Sciatic nerve (tissue), 2 donors: ENCODE measurements at regions of chr12 and their contacts with region 1.

Region 1: DNA sequence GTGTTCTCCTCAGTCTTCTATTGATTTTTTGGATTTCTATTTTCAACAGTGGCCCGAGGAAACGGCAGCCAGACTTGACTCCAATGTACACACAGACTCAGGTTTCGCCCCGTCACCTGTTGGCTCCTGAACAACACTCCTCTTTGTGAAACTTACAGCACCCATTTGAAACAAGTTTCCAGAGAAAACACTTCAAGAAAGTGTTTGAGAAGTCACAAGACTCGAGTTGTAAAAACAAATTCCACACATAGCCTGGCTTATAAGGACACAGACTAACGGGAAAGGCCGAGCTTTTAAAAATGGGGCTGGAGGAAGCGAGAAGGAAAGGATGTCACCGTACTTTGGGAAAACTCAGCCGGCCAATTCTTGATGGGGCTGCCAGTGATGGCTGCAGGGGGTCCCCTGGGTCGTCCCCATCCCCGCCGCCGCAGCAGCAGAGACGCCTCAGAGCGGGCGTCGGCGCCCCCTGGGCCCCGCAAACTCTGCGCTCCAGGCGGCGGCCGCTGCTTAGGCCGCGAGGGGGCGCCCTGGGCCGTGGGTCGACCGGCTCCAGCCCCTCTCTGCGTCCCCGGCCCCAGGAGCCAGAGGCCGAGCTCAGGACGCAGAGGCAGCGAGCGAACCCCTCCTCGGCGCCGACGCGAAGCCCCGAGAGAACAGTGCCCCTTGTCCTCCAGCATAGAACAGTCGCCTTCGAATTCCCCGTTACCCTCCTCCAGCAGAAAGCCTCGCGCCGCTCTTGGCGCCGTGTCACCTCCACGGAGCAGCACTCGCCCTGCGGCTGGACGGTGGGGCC is 106.9 kb downstream of the PRICKLE1 start:
- DNase-seq: peak; percentile 86
- ATAC-seq: peak; percentile 90

Region 2: GRCh38 chr12:42568952-42569915 is 86.6 kb after region 1 on chr12:
- intact Hi-C with region 1: loop called (anchors 10 kb)
- DNase-seq: no peak
- ATAC-seq: peak; percentile 56